ENCODE measurements at regions of chr16 and their contacts with region 1.

Region 1: DNA sequence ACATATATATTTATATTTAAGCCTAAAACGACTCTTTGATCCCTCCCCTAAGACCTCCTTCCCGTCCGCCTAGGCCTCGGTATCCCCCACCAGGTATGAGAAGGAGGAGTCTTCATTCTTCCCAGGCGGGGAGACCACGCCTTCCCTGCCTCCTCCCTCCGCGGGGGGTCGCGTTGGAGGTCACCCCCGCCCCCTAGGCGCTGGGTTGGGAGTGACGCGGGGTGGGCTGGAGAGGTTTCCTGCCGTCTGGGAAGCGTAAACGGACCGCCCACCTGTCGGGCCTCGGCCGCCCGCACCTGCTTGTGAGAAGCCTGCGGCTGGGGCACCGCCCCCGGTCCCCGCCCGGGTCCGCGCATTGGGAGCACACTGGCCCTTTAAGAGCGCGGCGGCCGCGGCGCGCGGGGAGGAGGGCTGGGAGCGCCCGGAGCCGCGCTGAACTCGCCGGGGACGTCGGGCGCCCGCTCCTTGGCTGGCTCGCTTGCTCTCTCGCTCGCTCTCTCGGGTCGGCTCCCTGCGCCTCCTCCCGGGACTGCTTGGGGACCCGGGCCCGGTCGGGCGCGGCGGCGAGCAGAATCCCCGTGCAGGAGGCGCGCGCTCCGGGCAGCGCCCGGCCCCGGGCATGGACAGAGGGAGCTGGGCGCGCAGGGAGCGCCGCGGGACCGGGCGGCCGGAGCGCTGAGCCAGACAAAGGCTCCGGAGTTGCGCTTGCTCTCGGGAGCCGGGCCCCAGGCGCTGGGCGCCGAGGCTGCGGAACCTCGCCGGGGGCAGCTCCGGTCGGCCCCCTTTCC is at the start of gene MMP15:
- DNase-seq: peak; percentile 51
- H3K4me3 Mint-ChIP-seq: peak within 1 kb of the TSS; percentile 89
- H3K27ac Mint-ChIP-seq: peak within 1 kb of the TSS; percentile 77
- H3K4me1 Mint-ChIP-seq: peaks cover 13% of the 10 kb centered on the region
- H3K27me3 Mint-ChIP-seq: peaks cover 28% of the 10 kb centered on the region
- total RNA-seq, gene MMP15: 1.1 and 1.3 TPM in 2 replicates

Region 2: DNA sequence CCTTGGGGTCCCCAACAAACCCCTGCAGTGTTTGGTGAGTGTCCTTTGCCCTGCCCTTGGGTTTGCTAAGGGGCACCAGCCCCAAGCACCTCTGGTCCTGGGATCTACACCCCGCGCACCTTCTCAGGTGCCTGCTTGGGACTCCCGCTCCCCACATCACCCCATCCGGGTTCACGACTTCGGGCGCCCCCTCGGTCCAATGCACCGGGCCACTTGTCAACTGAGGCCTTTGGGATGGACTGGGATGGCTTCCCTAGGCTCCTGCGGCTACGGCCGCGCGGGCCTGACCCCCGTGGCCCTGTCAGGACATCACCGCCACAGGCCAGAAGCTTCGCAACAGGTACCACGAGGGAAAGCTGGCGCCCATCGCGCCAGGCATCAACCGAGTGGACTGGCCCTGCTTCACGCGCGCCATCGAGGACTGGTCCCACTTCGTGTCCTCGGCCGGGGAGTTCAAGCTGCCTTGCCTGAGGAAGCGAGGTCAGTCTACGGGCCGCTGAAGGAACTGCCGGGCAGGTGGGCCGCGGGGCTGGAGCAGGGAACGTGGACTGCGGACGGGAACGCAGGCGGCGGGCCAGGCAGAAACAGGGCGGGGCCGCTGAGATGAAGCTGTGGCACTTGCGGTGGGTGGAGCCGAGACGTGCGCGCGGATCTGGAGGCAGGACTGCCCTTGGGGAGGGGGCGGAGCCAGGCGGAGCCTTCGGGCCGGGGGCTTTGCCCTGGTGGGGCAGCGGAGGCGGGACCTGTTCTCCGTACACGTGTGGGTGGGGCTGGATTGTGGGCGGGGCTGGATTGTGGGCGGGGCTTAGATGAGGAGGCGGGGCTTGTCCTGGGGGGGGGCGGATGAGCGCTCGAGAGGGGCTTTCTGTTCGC is 41.0 kb before region 1 on chr16:
- intact Hi-C with region 1: loop called (anchors 1 kb)
- DNase-seq: peak; percentile 89
- H3K4me3 Mint-ChIP-seq: peak overlapping the region; percentile 85
- H3K27ac Mint-ChIP-seq: no peak overlapping the region
- H3K4me1 Mint-ChIP-seq: no peaks in the 10 kb centered on the region
- H3K27me3 Mint-ChIP-seq: peaks cover 11% of the 10 kb centered on the region

Region 3: DNA sequence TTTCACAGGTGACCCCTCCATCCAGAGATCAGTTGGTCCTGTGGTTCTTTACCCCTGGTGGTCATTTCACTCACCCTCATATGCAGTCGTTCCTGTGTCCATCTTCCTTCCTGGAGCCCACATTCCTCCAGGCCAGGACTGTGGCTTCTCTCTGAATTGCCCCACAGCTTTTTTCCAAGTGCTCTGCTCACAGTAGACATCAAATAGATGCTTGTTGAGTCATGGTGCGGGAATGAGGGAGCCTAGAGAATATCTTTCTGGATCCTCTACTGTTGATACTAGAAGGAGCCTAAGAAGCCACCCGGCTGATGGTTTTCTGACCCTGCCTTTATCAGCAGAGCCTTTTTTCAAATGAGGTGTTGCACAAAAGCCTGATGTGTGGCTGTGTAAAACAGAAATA is 13.9 kb before region 1 on chr16:
- intact Hi-C with region 1: no loop called
- DNase-seq: no peak
- H3K4me3 Mint-ChIP-seq: no peak overlapping the region
- H3K27ac Mint-ChIP-seq: no peak overlapping the region
- H3K4me1 Mint-ChIP-seq: peaks cover 5% of the 10 kb centered on the region
- H3K27me3 Mint-ChIP-seq: no peaks in the 10 kb centered on the region

Region 4: GRCh38 chr16:58054289-58054688 is 28.7 kb after region 1 on chr16:
- intact Hi-C with region 1: loop called (anchors 1 kb)
- DNase-seq: no peak
- H3K4me3 Mint-ChIP-seq: no peak overlapping the region
- H3K27ac Mint-ChIP-seq: no peak overlapping the region
- H3K4me1 Mint-ChIP-seq: no peaks in the 10 kb centered on the region
- H3K27me3 Mint-ChIP-seq: no peaks in the 10 kb centered on the region

Region 5: DNA sequence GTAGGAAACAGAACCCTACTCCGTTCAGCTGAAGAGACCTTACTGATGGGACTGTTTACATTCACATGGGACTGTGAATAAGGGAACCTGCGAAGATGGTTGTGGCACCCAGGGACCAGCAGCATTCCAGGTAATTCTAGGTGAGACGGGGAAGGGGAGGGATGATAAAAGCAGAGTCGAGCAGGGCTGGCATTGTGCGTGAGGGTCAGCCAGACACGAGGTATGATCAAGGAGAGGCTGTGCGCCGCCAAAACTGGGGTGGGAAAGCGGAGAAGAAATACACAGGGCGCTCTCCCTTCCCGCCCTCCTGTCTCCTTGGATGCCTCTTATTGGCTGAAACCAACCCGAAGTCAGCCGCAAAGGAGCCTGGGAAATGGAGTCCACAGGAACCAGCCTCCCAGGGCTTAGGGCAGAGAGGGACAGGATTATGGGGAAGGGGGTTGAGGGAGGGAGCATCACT is 210.7 kb after region 1 on chr16:
- intact Hi-C with region 1: loop called (anchors 1 kb)
- DNase-seq: peak; percentile 52
- H3K4me3 Mint-ChIP-seq: peak overlapping the region; percentile 81
- H3K27ac Mint-ChIP-seq: no peak overlapping the region
- H3K4me1 Mint-ChIP-seq: peaks cover 13% of the 10 kb centered on the region
- H3K27me3 Mint-ChIP-seq: peaks cover 31% of the 10 kb centered on the region

Region 6: GRCh38 chr16:58306327-58306726 is 280.8 kb after region 1 on chr16:
- intact Hi-C with region 1: loop called (anchors 1 kb)
- DNase-seq: peak; percentile 3
- H3K4me3 Mint-ChIP-seq: no peak overlapping the region
- H3K27ac Mint-ChIP-seq: no peak overlapping the region
- H3K4me1 Mint-ChIP-seq: no peaks in the 10 kb centered on the region
- H3K27me3 Mint-ChIP-seq: peaks cover 12% of the 10 kb centered on the region

Region 7: DNA sequence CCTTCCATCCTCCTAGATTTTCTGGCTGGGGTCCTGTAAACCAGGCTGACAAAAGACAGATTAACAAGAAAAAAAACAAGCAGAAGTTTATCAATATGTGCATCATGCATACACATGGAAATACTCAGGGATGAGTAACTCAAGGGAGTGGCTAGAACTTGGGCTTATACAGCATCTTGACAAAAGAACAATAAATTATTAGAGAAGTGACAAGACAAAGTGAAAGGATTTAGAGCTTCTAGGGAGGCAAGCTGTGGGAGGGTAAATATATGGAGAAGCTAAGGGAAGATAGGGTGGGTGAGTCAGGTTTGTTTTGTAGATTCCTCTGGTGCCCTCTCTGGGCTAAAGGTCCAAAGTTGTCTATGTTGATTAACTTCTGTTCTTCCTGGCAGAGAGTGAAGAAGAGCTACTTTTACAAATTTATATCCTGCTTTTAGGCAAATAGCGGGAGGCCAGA is 426.4 kb after region 1 on chr16:
- intact Hi-C with region 1: no loop called
- DNase-seq: no peak
- H3K4me3 Mint-ChIP-seq: no peak overlapping the region
- H3K27ac Mint-ChIP-seq: no peak overlapping the region
- H3K4me1 Mint-ChIP-seq: no peaks in the 10 kb centered on the region
- H3K27me3 Mint-ChIP-seq: peaks cover 13% of the 10 kb centered on the region

Measured in activated T-helper 1 cell treated with anti-CD3 and anti-CD28 coated beads, Interleukin-12 subunit alpha, Interleukin-12 subunit beta, Interleukin-2, Interleukin-4 antibody, amounts not matched to agents 30 ng/mL and 10 ng/mL and 1 ng/mL, durations not matched to agents 14 hours and 24 hours and 36 hours (primary cell).